Activated CD4-positive, alpha-beta memory T cell treated with anti-CD3 and anti-CD28 coated beads for 36 hours (primary cell): ENCODE measurements at regions of chr3 and their contacts with region 1.

Region 1: GRCh38 chr3:127574880-127575878 is 15.4 kb downstream of the TPRA1 start:
- DNase-seq: peak; percentile 91
- H3K4me3 Mint-ChIP-seq: no peak overlapping the region
- H3K27ac Mint-ChIP-seq: no peak overlapping the region
- H3K4me1 Mint-ChIP-seq: peaks cover 8% of the 10 kb centered on the region
- H3K27me3 Mint-ChIP-seq: no peaks in the 10 kb centered on the region

Region 2: GRCh38 chr3:127590593-127591477 is 15.7 kb after region 1 on chr3 and contains the start of gene TPRA1:
- CTCF ChIA-PET with region 1: interaction called, 80 read pairs
- POLR2A ChIA-PET with region 1: interaction called, 5 read pairs
- intact Hi-C with region 1: loop called (anchors 1 kb)
- DNase-seq: peak; percentile 85
- H3K4me3 Mint-ChIP-seq: peak within 1 kb of the TSS; percentile 80
- H3K27ac Mint-ChIP-seq: peak within 1 kb of the TSS; percentile 92
- H3K4me1 Mint-ChIP-seq: peaks cover 23% of the 10 kb centered on the region
- H3K27me3 Mint-ChIP-seq: no peaks in the 10 kb centered on the region
- total RNA-seq, gene TPRA1: 18.7 to 20.9 TPM

Region 3: DNA sequence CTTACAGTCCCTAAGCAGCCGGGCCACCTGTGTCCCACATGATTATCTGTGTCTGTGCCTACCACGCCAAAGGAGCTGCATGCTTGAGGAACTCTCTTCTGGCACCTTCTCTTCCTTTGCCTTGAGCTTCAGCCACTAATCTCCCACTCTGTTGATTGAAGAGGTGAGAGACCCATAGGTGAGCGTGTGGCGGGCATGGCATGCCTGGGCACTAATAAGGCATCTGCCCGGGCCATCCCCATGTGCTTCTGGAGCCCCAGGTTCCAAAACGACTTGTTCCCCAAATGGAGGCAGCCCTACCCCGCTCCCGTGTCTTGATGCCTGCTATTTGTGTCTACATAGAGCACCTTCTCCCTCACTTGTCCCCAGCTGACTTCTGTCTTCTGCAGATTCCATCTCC is 36.1 kb after region 1 on chr3:
- CTCF ChIA-PET with region 1: interaction called, 11 read pairs
- POLR2A ChIA-PET with region 1: no interaction called
- intact Hi-C with region 1: no loop called
- DNase-seq: no peak
- H3K4me3 Mint-ChIP-seq: no peak overlapping the region
- H3K27ac Mint-ChIP-seq: no peak overlapping the region
- H3K4me1 Mint-ChIP-seq: no peaks in the 10 kb centered on the region
- H3K27me3 Mint-ChIP-seq: no peaks in the 10 kb centered on the region

Region 4: DNA sequence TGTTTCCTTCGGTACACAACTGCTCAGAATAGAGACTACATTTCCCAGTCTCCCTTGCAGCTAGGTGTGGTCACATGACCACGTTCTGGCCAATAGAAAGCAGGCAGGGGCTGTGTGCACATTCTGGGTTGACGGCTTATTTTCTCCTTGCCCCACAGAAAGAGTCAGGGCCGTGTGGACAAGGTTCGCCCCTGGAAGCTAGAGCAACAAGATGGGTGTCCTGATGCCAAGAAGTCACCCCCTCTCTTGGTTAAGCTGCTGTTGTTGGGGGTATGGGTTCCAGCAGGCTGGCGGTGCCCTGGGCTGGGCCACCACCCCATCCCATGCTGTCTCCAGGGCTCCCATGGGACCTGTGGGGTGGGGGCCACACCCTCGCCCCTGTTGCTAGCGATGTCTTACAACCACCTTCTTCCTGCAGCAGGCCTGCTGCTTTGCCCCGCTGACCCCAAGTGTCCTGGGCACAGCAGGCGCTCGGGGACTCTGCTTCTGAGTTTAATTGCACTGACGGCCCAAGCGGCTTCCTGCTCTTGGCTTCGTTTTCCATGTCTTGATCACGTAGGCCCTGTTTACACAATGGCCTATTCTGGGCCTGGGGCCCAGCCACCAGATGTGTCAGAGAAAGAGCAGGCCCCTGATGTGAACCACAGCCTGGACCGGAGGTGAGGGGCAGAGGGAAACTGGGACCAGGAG is 122.5 kb after region 1 on chr3:
- CTCF ChIA-PET with region 1: interaction called, 28 read pairs
- POLR2A ChIA-PET with region 1: no interaction called
- intact Hi-C with region 1: loop called (anchors 2 kb)
- DNase-seq: peak; percentile 66
- H3K4me3 Mint-ChIP-seq: no peak overlapping the region
- H3K27ac Mint-ChIP-seq: no peak overlapping the region
- H3K4me1 Mint-ChIP-seq: no peaks in the 10 kb centered on the region
- H3K27me3 Mint-ChIP-seq: no peaks in the 10 kb centered on the region

Region 5: DNA sequence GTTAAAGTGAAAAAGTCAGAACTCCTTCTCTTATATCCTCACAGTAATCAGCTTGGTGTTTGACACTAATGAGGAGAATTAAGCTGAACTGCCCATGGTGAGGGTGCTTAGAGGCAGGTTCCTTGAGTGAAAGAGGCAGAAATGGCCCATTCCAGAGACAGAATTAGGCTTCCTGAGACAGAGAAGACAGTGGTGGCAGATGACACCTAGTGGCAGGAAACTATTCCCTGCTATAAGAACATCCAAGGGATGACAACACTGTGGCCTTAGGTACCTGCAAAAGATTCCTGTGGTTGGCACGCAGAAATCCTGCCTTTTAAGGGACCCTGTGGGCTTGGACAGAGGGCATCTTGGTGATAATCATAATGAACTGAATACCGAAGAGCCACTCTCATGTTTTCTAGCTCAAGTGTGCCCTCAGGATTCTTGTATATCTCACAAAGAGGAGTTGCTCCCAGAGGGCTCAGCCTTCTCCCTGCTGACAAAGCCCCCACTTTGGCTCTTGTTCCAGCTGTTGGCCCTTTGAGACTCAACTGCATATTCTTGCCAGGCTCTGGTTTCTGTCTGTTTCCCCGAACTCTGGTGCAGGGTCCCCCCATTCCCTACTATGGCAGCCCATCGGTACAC is 395.9 kb after region 1 on chr3:
- CTCF ChIA-PET with region 1: interaction called, 14 read pairs
- POLR2A ChIA-PET with region 1: no interaction called
- intact Hi-C with region 1: loop called (anchors 2 kb)
- DNase-seq: peak; percentile 21
- H3K4me3 Mint-ChIP-seq: no peak overlapping the region
- H3K27ac Mint-ChIP-seq: no peak overlapping the region
- H3K4me1 Mint-ChIP-seq: no peaks in the 10 kb centered on the region
- H3K27me3 Mint-ChIP-seq: peaks cover 8% of the 10 kb centered on the region